ENCODE measurements at regions of chr10 and their contacts with region 1.

Region 1: GRCh38 chr10:30591249-30591670 is 38.3 kb downstream of the LYZL2 start:
- DNase-seq: peak; percentile 65
- ATAC-seq: peak; percentile 47
- H3K4me3 ChIP-seq: no peak overlapping the region; a peak in 1 of 6 replicates
- H3K27ac ChIP-seq: no peak overlapping the region
- H3K4me1 ChIP-seq: peaks cover 71% of the 10 kb centered on the region
- H3K27me3 ChIP-seq: no peaks in the 10 kb centered on the region
- CTCF ChIP-seq: peak; percentile 82
- EP300 ChIP-seq: no peak
- POLR2A ChIP-seq: no peak
- RAD21 ChIP-seq: peak; percentile 77; the same call in 1 of the 2 replicates

Region 2: DNA sequence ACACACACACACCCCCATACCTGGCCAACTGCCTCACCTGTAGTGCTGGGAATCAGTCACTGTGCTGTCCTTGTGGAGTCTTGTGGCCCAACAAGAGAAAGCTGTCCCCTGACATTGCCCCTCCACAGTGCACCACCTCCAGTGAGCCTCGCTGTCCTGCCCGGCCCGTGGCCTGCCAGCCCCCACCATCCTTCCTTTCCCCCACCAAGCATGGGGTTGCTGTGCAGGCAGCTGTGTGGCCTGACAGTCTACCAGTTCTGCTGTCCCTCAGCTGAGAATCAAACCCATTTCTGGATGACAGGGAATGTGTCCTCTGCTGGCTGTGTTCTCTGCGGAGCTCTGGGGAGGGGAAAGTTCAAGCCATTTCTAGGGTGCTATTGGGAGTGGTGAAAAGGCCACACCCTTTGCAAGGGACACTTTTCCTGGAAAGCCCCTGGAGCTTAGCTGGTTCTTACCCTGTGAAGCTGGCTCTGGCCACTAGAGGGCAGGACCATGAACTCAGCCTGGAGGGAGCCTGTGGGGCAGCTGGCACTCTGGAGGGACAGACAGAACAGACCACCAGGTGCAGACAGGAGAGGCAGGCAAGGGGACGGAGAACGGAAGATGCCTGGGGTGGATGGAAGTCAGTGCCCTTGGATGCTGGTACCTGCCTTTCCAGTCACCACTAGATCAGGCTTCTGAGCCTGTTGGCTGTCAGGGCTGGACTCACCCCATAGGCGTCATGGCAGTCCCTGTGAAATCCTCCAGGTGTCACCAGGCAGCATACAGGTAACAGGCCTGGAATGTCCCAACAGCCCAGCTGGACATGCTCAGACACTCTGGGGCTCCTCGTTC is 231.7 kb before region 1 on chr10:
- CTCF ChIA-PET with region 1: interaction called, 10 read pairs
- POLR2A ChIA-PET with region 1: no interaction called
- in situ Hi-C with region 1: no loop called
- intact Hi-C with region 1: no loop called
- DNase-seq: peak; percentile 81
- ATAC-seq: peak; percentile 94
- H3K4me3 ChIP-seq: peak overlapping the region in 1 of 3 experiments; percentile 54; a peak in 2 of 6 replicates
- H3K27ac ChIP-seq: no peak overlapping the region
- H3K4me1 ChIP-seq: peaks cover 5% of the 10 kb centered on the region
- H3K27me3 ChIP-seq: peaks cover 0 to 4% of the 10 kb centered on the region in 2 experiments; a peak in 1 of 5 replicates
- CTCF ChIP-seq: peak; percentile 91
- EP300 ChIP-seq: no peak
- POLR2A ChIP-seq: no peak
- RAD21 ChIP-seq: peak; percentile 63

Region 3: GRCh38 chr10:30392564-30392990 is 198.7 kb before region 1 on chr10:
- CTCF ChIA-PET with region 1: interaction called, 15 read pairs
- POLR2A ChIA-PET with region 1: no interaction called
- in situ Hi-C with region 1: loop called (anchors 5 kb)
- intact Hi-C with region 1: loop called (anchors 1 kb)
- DNase-seq: peak; percentile 59
- ATAC-seq: peak; percentile 98
- H3K4me3 ChIP-seq: peak overlapping the region in 1 of 3 experiments; percentile 53; a peak in 2 of 6 replicates
- H3K27ac ChIP-seq: no peak overlapping the region
- H3K4me1 ChIP-seq: peaks cover 45% of the 10 kb centered on the region
- H3K27me3 ChIP-seq: peaks cover 0 to 15% of the 10 kb centered on the region in 2 experiments; a peak in 4 of 5 replicates
- CTCF ChIP-seq: peak; percentile 98
- EP300 ChIP-seq: 0 out of 4 replicates have a peak, but pooled peaks of 1 of the 2 experiments have one; percentile 10
- POLR2A ChIP-seq: no peak
- RAD21 ChIP-seq: peak; percentile 93

Region 4: DNA sequence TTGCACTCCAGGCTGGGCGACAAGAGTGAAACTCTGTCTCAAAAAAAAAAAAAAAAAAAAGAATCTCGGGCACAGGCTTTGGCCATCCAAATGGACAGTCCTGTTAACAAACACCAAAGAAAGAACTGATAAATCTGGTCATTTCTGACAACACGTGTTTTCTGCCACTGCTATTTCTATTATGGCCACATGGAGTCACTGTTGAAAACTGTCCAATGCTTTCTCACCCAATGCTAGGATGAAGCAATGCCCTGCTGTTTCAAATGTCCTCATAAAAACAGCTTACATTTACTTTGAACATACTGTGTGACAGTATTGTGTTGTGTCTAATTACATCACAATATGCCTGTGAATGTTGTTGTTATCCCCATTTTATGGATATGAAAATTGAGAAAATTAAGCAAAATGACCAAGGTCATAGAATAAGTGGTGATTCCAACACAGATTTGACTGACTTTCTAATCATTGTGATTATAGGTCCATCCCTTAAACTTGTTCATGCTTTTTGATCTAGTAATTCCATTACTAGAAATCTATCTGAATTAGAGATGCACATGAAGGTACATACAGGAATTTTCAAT is 177.2 kb before region 1 on chr10:
- CTCF ChIA-PET with region 1: interaction called, 7 read pairs
- POLR2A ChIA-PET with region 1: no interaction called
- in situ Hi-C with region 1: no loop called
- intact Hi-C with region 1: loop called (anchors 1 kb)
- DNase-seq: peak; percentile 70
- ATAC-seq: peak; percentile 80
- H3K4me3 ChIP-seq: no peak overlapping the region
- H3K27ac ChIP-seq: no peak overlapping the region
- H3K4me1 ChIP-seq: peaks cover 29% of the 10 kb centered on the region
- H3K27me3 ChIP-seq: no peaks in the 10 kb centered on the region
- CTCF ChIP-seq: peak; percentile 85
- EP300 ChIP-seq: no peak
- POLR2A ChIP-seq: no peak
- RAD21 ChIP-seq: peak; percentile 78

Region 5: DNA sequence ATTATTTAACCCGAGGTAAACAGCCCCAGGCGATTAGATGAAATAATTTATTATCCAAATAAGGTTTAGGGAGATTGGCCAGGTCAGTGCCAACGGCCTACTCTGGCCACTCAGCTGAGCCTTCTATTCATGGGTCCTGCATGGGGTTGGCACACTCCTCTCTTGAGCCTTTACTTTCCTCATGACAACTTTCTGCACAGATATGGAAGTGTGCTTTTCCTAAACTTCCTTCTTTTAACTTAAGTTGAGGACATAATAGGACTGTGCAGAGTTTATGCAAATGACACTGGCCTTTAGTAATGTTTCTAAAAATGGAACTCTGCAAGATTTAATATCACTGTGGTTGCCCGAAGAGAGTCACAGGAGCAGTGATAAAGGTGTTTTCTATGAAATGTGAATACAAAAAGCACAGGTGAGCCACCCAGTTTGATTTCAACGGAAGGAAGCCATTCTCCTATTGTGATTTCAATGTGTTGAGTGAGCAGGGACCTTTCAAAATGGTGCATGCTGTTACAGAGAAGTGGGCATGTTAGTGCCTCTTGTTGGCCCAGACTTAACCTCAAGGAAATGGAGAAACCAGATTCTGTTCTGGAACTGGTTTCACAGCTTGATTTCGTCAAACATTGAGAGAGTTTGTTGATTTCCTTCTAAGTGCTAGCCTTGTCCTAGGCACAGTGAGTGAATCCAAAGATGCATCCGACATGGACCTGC is 17.4 kb before region 1 on chr10:
- CTCF ChIA-PET with region 1: no interaction called
- POLR2A ChIA-PET with region 1: no interaction called
- in situ Hi-C with region 1: no loop called
- intact Hi-C with region 1: no loop called
- DNase-seq: no peak
- ATAC-seq: no peak
- H3K4me3 ChIP-seq: no peak overlapping the region
- H3K27ac ChIP-seq: no peak overlapping the region
- H3K4me1 ChIP-seq: peaks cover 3% of the 10 kb centered on the region
- H3K27me3 ChIP-seq: peaks cover 3 to 18% of the 10 kb centered on the region in 2 experiments; a peak in 3 of 5 replicates
- CTCF ChIP-seq: no peak
- EP300 ChIP-seq: no peak
- POLR2A ChIP-seq: no peak
- RAD21 ChIP-seq: no peak

Region 6: DNA sequence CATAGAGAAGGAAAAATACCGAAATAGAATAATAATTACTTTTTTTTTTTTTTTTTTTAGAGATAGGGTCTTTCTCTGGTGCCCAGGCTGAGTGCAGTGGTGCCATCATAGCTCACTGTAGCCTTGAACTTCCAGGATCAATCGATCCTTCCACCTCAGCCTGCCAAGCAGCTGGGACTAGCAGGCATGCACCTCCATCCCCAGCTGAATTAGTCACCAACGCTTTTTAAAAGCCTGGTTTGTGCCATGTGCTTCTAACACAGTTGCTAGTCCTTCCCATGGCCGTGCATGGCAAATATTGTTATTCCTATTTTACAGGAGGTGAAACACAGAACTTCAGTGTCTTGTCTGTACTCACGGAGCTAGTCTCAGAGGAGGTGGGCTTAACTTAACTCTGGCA is 15.1 kb after region 1 on chr10:
- CTCF ChIA-PET with region 1: no interaction called
- POLR2A ChIA-PET with region 1: interaction called, 15 read pairs
- in situ Hi-C with region 1: no loop called
- intact Hi-C with region 1: no loop called
- DNase-seq: peak; percentile 48
- ATAC-seq: peak; percentile 10; the same call in 2 of the 3 replicates
- H3K4me3 ChIP-seq: peak overlapping the region in 1 of 3 experiments; percentile 26; a peak in 1 of 6 replicates
- H3K27ac ChIP-seq: peak overlapping the region; percentile 97
- H3K4me1 ChIP-seq: peaks cover 96% of the 10 kb centered on the region
- H3K27me3 ChIP-seq: no peaks in the 10 kb centered on the region
- CTCF ChIP-seq: no peak
- EP300 ChIP-seq: no peak
- POLR2A ChIP-seq: no peak
- RAD21 ChIP-seq: no peak

Region 7: GRCh38 chr10:30639946-30640786 is 48.9 kb after region 1 on chr10:
- CTCF ChIA-PET with region 1: no interaction called
- POLR2A ChIA-PET with region 1: no interaction called
- in situ Hi-C with region 1: no loop called
- intact Hi-C with region 1: no loop called
- DNase-seq: peak; percentile 53
- ATAC-seq: no peak
- H3K4me3 ChIP-seq: no peak overlapping the region
- H3K27ac ChIP-seq: no peak overlapping the region
- H3K4me1 ChIP-seq: peaks cover 45% of the 10 kb centered on the region
- H3K27me3 ChIP-seq: peaks cover 0 to 4% of the 10 kb centered on the region in 2 experiments; a peak in 1 of 5 replicates
- CTCF ChIP-seq: peak; percentile 66
- EP300 ChIP-seq: no peak
- POLR2A ChIP-seq: no peak
- RAD21 ChIP-seq: no peak

Region 8: DNA sequence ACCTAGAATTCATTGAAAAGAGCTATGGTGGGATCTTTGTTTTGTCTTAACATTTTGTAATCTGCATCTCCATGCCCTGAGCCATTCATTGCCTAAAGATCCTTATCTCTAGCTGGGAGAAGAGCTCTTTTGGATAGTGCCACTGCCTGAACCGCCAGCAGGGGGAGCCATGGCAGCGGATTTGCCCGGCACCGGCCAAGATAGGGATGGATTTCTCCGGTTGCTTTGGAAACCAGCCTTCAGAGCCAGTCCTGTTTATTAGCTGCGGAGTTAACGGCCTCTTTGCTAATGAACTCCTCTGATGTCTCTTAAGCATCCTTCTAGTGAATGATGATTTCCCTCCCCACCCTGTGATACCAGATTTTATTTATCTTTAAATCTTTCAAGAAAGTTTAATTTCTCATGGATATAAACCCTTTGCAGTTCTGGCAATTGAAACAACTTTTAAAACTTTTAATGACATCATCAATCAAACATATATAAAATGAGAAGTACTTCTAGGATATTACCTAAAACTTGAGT is 96.5 kb after region 1 on chr10:
- CTCF ChIA-PET with region 1: no interaction called
- POLR2A ChIA-PET with region 1: no interaction called
- in situ Hi-C with region 1: no loop called
- intact Hi-C with region 1: no loop called
- DNase-seq: peak; percentile 40
- ATAC-seq: peak; percentile 90
- H3K4me3 ChIP-seq: no peak overlapping the region
- H3K27ac ChIP-seq: no peak overlapping the region
- H3K4me1 ChIP-seq: no peaks in the 10 kb centered on the region
- H3K27me3 ChIP-seq: peaks cover 0 to 34% of the 10 kb centered on the region in 2 experiments; a peak in 1 of 5 replicates
- CTCF ChIP-seq: peak; percentile 77
- EP300 ChIP-seq: no peak
- POLR2A ChIP-seq: no peak
- RAD21 ChIP-seq: peak; percentile 36

Region 9: DNA sequence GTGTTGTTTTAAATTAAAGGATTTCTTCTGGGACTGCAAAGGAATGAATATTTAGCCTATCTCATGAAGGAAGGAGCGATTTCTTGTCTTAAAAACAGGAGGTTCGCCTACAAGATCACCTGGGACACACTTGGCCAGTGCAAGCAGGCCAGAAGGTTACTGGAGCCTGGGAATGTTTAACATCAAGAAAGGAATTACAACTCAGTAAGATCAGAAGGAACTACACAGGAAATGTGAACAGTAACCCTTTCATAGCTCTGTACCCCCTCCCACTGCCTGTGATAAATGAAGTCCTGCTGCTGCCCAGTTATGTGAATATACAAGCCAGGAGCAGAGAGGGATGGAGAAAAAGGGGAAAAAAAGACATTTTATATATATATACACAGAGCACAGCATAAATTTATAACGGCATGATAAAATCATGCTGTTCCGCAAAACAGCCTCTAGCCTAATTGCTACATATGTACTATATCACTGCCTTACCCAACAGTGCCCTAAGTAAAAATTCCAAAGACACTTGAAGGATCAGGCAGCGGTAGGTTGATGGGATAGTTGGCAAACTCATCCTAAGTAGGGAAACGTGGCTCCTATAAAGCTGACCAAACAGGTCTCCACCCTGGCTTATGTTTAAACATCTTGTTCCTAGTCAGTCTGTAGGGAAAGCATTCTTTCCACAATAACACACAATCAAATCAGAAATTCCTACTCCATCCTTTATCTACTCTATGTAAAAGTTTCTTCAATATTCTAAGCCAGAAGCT is 376.6 kb after region 1 on chr10:
- CTCF ChIA-PET with region 1: no interaction called
- POLR2A ChIA-PET with region 1: no interaction called
- in situ Hi-C with region 1: no loop called
- intact Hi-C with region 1: no loop called
- DNase-seq: no peak
- ATAC-seq: no peak
- H3K4me3 ChIP-seq: no peak overlapping the region
- H3K27ac ChIP-seq: no peak overlapping the region
- H3K4me1 ChIP-seq: no peaks in the 10 kb centered on the region
- H3K27me3 ChIP-seq: no peaks in the 10 kb centered on the region
- CTCF ChIP-seq: no peak
- EP300 ChIP-seq: no peak
- POLR2A ChIP-seq: no peak
- RAD21 ChIP-seq: no peak

Measured in HepG2 (cell line).